ENCODE measurements at regions of chr13 and their contacts with region 1.

Region 1: DNA sequence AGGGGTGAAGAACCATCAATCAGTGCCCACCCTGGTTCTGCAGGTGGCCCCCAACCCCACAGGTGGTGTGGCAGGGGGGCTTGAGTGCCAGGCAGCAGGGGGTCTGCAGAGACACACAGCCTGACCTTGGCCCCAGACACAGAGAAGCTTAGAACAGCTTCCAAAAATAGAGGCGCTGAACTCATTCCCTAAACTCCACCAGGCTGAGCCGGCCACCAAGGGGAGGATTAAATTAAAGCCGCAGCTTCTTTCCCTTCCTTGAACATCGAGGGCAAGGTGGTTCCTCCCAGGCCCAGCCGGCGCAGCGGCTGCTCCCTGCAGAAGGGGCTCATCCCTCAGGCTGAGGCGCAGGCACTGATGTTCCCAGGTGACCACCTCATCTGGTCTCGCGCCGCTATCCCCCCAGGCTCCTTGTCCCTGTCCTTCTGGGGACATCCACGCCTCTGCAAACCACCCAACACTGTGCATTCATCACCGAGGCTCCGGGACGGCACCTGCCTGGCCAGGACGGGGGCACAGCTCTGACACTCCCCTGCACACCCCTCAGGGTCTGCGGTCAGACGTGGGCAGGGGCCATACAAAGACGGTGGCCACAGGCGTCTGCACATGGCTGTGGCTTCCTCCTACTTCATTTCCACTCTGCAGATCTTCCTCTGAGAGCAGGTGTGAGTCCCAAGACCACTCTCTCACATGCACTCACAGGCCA is 30.9 kb downstream of the LAMP1 start:
- DNase-seq: no peak
- H3K27ac ChIP-seq: no peak overlapping the region
- CTCF ChIP-seq: no peak

Region 2: DNA sequence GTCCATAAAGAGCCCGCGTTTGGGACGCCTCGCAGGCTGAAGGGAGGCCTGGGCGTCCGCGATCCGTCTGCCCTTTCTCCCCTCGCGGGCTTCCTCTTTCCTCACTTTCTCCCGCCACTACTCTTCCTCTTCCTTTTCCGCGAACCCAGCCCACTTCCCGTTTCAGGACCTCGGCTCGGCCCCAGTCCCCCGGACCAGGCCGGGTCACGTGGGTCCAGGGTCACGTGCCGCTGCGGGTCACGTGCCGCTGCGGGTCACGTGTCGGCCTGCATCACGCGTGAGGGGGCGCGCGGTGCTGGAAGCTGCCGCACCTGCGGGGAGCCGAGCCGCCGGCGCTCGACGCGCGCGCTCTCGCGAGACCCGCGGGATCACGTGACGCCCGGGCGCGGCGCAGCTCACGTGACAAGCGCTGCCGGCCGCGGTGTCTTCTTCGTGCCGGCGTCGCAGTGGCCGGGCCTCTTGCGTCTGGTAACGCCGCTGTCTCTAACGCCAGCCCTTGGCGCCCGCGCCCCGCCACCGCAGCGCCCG is 31.0 kb before region 1 on chr13 and contains the start of gene LAMP1:
- CTCF ChIA-PET with region 1: no interaction called
- POLR2A ChIA-PET with region 1: interaction called, 15 read pairs
- DNase-seq: peak; percentile 97
- H3K27ac ChIP-seq: peak within 1 kb of the TSS; percentile 82
- CTCF ChIP-seq: no peak

Region 3: DNA sequence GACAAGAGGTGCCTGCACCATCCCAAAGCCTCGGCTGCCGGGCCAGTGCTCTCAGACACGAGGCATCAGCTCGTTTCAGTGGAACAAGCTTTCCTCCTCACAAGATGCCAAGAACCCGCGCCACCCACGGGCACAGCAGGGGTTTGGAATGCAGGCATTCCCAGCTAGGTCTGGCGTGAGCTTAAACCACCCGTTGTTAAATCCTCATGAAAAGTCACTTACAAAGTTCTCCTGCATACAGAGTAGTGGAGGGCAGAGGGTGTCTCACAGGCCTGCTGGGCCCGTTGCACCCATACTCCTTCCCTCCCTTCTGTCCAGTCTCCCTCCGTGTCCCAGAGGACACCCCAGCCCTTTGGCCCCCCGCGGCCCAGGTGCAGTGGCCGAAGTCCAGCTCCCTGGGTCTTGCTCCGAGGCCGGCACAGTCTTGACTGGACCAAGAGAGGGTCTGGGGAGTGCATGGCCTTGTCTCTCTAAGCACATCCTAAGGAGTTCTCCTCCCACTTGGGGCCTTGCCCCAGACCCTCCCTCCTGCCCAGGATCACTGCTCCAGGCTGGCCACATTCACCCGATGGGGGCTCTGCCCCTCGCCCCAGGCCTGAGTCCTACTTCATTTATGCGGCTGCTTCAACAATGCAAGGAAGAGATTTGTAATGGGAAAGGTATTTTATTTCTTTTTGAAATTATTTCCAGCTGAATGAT is 71.2 kb after region 1 on chr13:
- CTCF ChIA-PET with region 1: no interaction called
- POLR2A ChIA-PET with region 1: no interaction called
- DNase-seq: no peak
- H3K27ac ChIP-seq: no peak overlapping the region
- CTCF ChIP-seq: no peak

Region 4: DNA sequence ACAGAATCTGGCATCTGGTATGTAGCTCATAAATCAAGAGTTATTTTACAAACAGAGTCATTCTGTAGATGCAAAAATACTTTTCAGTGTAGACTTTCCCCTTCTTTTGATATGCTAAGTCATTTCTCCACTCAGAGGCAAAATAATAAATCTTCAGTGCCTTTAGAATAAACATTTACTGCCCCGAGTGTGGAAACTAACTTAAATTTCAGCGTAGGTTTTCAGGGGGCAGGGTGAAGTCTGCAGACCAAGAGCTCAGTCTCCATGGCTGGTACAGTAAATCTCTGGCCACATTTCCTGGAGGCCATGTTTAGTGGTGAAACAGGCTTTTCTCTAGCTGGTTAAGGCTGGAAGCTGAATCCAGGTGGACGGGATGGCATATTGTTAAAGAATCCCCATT is 138.5 kb after region 1 on chr13:
- CTCF ChIA-PET with region 1: interaction called, 10 read pairs
- POLR2A ChIA-PET with region 1: no interaction called
- DNase-seq: no peak
- H3K27ac ChIP-seq: no peak overlapping the region
- CTCF ChIP-seq: no peak